HEK293 (cell line): ENCODE measurements at regions of chr16 and their contacts with region 1.

Region 1: DNA sequence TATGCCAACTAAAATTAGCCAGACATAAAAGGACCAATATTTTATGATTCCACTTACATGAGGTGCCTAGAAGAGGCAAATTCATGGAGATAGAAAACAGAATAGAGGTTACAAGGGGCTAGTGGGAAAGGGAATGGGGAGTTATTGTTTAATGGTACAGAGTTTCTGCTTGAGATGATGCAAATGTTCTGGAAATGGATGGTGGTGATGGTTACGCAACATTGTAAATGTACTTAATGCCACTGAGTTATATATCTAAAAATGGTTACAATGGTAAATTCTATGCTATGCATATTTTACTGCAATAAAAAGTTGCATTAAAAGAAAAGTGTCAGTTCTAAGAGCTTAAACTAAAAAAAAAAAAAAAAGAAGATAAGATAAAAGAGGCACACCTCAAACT is 17.9 kb downstream of the MT1X start:
- H3K4me3 ChIP-seq: no peak overlapping the region
- H3K27ac ChIP-seq: no peak overlapping the region
- H3K4me1 ChIP-seq: no peaks in the 10 kb centered on the region
- CTCF ChIP-seq: no peak

Region 2: DNA sequence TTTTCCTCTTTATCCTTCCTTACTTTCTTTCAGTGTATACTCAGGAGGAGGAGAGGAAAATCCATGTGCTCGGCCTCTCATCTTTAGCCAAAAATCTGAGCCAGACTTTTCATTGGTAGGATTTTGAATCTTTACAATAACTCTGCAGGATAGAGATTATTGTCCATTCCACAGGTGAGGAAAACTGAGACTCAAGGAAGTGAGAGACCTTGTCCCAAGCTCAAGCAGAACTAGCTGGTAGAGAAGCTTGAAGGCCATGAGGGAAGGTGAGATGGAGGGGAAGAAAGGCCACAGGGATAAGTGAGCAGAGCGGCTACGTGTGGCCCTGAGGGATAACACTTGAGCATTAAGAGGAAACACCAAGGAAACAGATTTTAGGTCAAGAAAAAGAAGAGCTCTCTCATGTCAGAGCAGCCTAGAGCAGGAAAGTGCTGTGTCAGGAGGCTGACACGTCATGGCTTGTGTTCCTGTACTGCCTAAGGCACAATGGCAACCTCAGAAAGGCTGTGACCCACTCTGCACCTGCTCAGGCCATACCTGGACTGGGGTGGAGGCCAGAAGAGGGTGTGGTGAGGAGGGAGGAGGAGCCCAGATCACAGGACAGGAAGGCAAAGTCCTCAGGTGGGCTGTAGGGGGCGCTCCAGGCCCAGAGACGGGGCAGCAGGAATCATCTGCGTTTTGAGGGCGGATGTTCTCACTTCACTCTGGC is 123.5 kb before region 1 on chr16:
- CTCF ChIA-PET with region 1: interaction called, 66 read pairs
- POLR2A ChIA-PET with region 1: no interaction called
- H3K4me3 ChIP-seq: no peak overlapping the region
- H3K27ac ChIP-seq: no peak overlapping the region
- H3K4me1 ChIP-seq: no peaks in the 10 kb centered on the region
- CTCF ChIP-seq: peak; percentile 37; the same call in 1 of the 2 replicates

Region 3: GRCh38 chr16:56600398-56600999 is 99.7 kb before region 1 on chr16:
- CTCF ChIA-PET with region 1: interaction called, 66 read pairs
- POLR2A ChIA-PET with region 1: interaction called, 3 read pairs
- H3K4me3 ChIP-seq: no peak overlapping the region
- H3K27ac ChIP-seq: no peak overlapping the region
- H3K4me1 ChIP-seq: no peaks in the 10 kb centered on the region
- CTCF ChIP-seq: peak; percentile 42; the same call in 1 of the 2 replicates

Region 4: GRCh38 chr16:56673921-56674320 is 26.3 kb before region 1 on chr16:
- CTCF ChIA-PET with region 1: interaction called, 31 read pairs
- POLR2A ChIA-PET with region 1: no interaction called
- H3K4me3 ChIP-seq: no peak overlapping the region
- H3K27ac ChIP-seq: no peak overlapping the region
- H3K4me1 ChIP-seq: no peaks in the 10 kb centered on the region
- CTCF ChIP-seq: no peak

Region 5: DNA sequence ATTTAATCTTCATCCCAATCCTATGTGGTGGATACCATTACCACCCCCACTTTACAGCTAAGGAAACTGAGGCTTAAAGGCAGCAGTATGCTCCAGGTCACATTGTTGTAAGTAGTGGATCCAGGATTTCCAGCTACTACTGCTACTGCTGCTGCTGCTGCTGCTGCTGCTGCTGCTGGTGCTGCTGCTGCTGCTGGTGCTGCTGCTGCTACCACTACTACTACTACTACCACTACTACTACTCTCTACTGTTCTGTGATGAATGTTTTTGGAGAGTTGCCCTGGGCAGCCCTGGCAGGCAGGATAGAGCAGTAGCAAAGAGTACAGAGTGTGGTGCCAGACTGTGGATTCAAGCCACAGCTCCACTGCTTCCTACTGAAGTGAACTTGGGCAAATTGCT is 115.5 kb after region 1 on chr16:
- CTCF ChIA-PET with region 1: no interaction called
- POLR2A ChIA-PET with region 1: no interaction called
- H3K4me3 ChIP-seq: no peak overlapping the region
- H3K27ac ChIP-seq: no peak overlapping the region
- H3K4me1 ChIP-seq: peaks cover 3% of the 10 kb centered on the region; the same call in 1 of the 2 replicates
- CTCF ChIP-seq: no peak